Uterus (tissue), 4 donors: ENCODE measurements at regions of chr6 and their contacts with region 1.

Region 1: GRCh38 chr6:108260809-108261569 is at the start of gene SNX3:
- DNase-seq: peak; percentile 94 to 95
- H3K4me3 ChIP-seq: peak within 1 kb of the TSS; percentile 92 to 96
- H3K27ac ChIP-seq: peak within 1 kb of the TSS; percentile 95 to 99
- H3K4me1 ChIP-seq: no peaks in the 10 kb centered on the region
- H3K27me3 ChIP-seq: no peaks in the 10 kb centered on the region
- CTCF ChIP-seq: peak in 1 of 4 experiments; percentile 11
- POLR2A ChIP-seq: peak; percentile 67 to 80
- total RNA-seq, gene SNX3: 94.3 to 215 (median 160) TPM

Region 2: DNA sequence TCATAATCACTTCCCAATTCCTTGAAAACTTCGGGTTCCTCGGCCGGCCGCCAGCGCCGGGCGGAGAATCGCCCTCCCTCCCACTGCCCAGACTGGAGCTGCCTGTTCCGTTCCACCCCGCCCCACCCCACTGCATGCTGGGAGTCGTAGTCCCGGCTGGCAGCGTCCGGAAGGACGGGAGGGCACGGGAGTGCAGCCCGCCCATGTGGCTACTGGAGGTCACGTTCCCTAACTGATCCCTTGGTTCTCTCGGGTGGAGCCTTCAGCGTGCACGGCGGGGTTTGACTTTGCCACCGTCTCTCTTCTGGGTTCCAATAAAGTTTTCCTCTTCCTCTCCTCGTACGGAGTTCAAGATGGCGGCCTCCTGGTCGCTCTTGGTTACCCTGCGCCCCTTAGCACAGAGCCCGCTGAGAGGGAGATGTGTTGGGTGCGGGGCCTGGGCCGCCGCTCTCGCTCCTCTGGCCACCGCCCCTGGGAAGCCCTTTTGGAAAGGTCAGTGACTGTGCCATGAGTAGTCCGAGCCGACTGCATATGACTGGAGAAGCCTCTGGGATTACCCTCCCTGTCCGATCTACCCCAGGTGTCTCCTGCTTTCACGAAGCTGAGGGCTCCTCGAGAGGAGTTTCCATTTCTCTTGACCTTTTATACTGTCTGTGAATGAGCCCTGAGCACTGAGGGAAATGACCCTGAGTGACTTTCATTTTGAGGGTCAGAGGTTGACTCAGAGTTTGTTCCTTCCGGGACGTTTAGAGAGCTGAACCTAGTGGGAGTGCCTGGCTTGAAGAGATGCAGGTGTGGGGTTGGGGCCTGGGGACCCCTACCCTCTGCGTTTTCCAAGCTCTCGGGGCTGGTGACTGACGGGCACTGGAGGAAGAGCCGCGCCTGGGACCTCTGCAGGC is 34.0 kb after region 1 on chr6 and contains the start of gene AFG1L:
- intact Hi-C with region 1: loop called (anchors 2 kb)
- DNase-seq: peak; percentile 89 to 90
- H3K4me3 ChIP-seq: peak within 1 kb of the TSS; percentile 55 to 64
- H3K27ac ChIP-seq: peak within 1 kb of the TSS; percentile 80 to 81
- H3K4me1 ChIP-seq: no peaks in the 10 kb centered on the region
- H3K27me3 ChIP-seq: no peaks in the 10 kb centered on the region
- CTCF ChIP-seq: peak in 1 of 4 experiments; percentile 14
- POLR2A ChIP-seq: peak; percentile 37 to 55
- total RNA-seq, gene AFG1L: under 0.01 to 9.4 (median 5.2) TPM